Ascending aorta (tissue), 2 donors: ENCODE measurements at regions of chr6 and their contacts with region 1.

Region 1: DNA sequence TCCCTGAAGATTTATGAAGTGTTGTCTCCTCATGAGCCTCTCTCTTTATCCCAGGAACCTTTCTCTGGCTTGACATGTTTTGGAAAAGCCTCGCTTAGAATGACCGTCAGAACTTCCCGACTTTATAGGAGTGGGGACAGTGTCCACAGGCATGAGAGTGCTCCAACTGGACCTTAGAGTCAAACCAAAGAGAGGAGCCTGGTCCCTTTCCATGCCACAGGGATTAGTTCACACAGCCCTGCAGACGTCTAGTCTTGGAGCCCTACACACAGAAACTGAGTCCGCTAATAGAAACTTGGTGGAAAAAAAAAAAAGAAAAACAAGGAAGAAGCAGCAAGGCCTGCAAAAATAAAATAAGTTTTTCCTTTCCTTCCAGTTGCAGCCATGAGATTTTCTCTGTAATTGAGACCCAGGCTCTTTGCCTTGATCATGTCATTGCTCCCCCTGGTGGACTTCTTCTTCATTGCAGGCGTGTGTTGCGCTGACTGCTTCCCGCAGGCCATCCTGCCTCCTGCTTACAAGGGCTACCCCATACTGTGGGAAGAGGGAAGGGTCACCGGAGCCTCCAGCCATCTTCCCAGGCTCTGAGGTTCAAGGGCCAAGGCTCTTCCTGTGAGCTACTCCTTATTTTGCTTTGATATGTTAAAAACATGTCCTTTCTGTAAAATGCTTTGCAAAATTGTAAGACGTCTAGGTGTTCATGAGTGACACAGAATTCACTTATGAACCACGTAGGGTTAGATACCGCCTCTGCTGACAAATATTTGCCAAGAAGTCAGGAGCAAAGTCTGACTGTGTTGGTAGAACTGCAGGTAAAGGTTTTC is 201.0 kb downstream of the UST start:
- DNase-seq: peak; percentile 33 to 92
- H3K4me3 ChIP-seq: no peak overlapping the region
- H3K27ac ChIP-seq: no peak overlapping the region
- H3K4me1 ChIP-seq: no peaks in the 10 kb centered on the region
- H3K27me3 ChIP-seq: no peaks in the 10 kb centered on the region
- CTCF ChIP-seq: peak; percentile 80 to 88 (median 81)

Region 2: DNA sequence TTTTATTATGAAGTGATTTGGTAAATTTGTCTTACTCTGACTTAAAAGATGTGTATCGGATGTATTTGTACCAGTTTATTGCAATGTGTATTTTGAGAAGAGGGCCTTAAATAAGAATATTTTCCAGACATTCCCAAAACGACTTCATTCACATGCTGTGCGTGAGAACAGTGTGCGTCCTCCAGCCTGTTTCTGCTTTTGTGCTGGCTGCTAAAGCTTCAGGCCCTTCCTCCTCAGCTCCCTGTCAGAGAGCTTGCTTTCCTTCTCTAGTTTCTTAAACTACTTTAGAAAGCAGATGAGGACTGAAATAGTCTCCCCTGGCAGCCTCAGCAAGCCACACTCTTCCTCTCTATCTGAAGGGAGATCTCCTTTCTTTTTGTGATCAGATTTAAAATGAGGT is 1281.6 kb before region 1 on chr6:
- intact Hi-C with region 1: no loop called
- DNase-seq: no peak
- H3K4me3 ChIP-seq: no peak overlapping the region
- H3K27ac ChIP-seq: no peak overlapping the region
- H3K4me1 ChIP-seq: no peaks in the 10 kb centered on the region
- H3K27me3 ChIP-seq: no peaks in the 10 kb centered on the region
- CTCF ChIP-seq: no peak

Region 3: DNA sequence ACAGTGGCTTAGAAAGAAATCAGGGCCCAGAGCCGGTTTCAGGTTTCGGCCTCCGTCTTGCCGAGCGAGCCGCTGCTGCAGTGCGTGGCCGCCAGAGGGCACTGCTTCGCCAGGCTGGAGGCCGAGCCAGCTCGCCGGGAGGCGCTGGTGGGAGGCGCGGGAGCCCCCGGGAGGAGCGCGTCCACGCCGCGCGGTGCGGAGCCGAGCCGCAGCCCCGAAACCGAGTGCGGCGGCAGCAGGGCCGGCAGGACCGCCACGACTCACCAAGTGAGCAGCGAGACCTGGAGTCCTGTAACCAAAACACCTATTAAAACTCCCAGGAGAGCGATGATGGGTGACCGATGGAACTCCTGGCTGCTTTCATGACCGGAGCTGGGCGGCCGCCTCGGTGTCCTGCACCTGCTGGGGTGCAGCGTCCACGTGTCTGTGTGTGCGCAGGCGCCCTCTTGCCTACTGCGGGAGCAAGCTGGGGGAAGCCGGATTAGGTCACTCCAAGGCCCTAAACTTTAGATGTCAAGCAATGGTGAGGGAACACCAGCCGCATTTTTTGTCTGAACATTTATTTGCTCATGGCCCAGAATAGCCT is 387.9 kb before region 1 on chr6:
- intact Hi-C with region 1: loop called (anchors 5 kb)
- DNase-seq: peak in 1 of 2 donors; percentile 86
- H3K4me3 ChIP-seq: peak overlapping the region; percentile 55 to 66
- H3K27ac ChIP-seq: peak overlapping the region in 1 of 2 donors; percentile 22
- H3K4me1 ChIP-seq: peaks cover 0 to 2% of the 10 kb centered on the region in 2 donors
- H3K27me3 ChIP-seq: no peaks in the 10 kb centered on the region
- CTCF ChIP-seq: peak; percentile 93 to 98 (median 94)